ENCODE measurements at regions of chr16 and their contacts with region 1.

Region 1: GRCh38 chr16:15592324-15592723 is 50.6 kb downstream of the MARF1 start:
- DNase-seq: no peak
- H3K4me3 ChIP-seq: no peak overlapping the region
- H3K27ac ChIP-seq: no peak overlapping the region
- H3K4me1 ChIP-seq: peaks cover 17% of the 10 kb centered on the region
- H3K27me3 ChIP-seq: no peaks in the 10 kb centered on the region
- CTCF ChIP-seq: no peak
- POLR2A ChIP-seq: no peak

Region 2: GRCh38 chr16:15434425-15435215 is 157.7 kb before region 1 on chr16 and contains the start of gene BMERB1:
- CTCF ChIA-PET with region 1: no interaction called
- POLR2A ChIA-PET with region 1: no interaction called
- dilution Hi-C with region 1: no loop called
- intact Hi-C with region 1: loop called (anchors 2 kb)
- DNase-seq: peak; percentile 73
- H3K4me3 ChIP-seq: peak within 1 kb of the TSS; percentile 67 to 96 (median 72)
- H3K27ac ChIP-seq: no peak within 1 kb of the TSS
- H3K4me1 ChIP-seq: peaks cover 9% of the 10 kb centered on the region
- H3K27me3 ChIP-seq: no peaks in the 10 kb centered on the region
- CTCF ChIP-seq: no peak
- POLR2A ChIP-seq: no peak
- total RNA-seq, gene BMERB1: 14.1 and 27.2 TPM in 2 replicates

Region 3: GRCh38 chr16:15502041-15502725 is 90.1 kb before region 1 on chr16:
- CTCF ChIA-PET with region 1: no interaction called
- POLR2A ChIA-PET with region 1: no interaction called
- dilution Hi-C with region 1: no loop called
- intact Hi-C with region 1: loop called (anchors 2 kb)
- DNase-seq: peak; percentile 93
- H3K4me3 ChIP-seq: peak overlapping the region in 1 of 3 experiments; percentile 40
- H3K27ac ChIP-seq: peak overlapping the region; percentile 68
- H3K4me1 ChIP-seq: peaks cover 15% of the 10 kb centered on the region
- H3K27me3 ChIP-seq: no peaks in the 10 kb centered on the region
- CTCF ChIP-seq: no peak
- POLR2A ChIP-seq: no peak

Region 4: GRCh38 chr16:15581127-15581815 is 11.1 kb before region 1 on chr16:
- CTCF ChIA-PET with region 1: interaction called, 8 read pairs
- POLR2A ChIA-PET with region 1: no interaction called
- dilution Hi-C with region 1: no loop called
- intact Hi-C with region 1: loop called (anchors 1 kb)
- DNase-seq: peak; percentile 61
- H3K4me3 ChIP-seq: no peak overlapping the region
- H3K27ac ChIP-seq: peak overlapping the region; percentile 58
- H3K4me1 ChIP-seq: peaks cover 15% of the 10 kb centered on the region
- H3K27me3 ChIP-seq: no peaks in the 10 kb centered on the region
- CTCF ChIP-seq: no peak
- POLR2A ChIP-seq: no peak

Region 5: GRCh38 chr16:16120382-16121184 is 528.3 kb after region 1 on chr16:
- CTCF ChIA-PET with region 1: no interaction called
- POLR2A ChIA-PET with region 1: no interaction called
- dilution Hi-C with region 1: no loop called
- intact Hi-C with region 1: loop called (anchors 2 kb)
- DNase-seq: peak; percentile 98
- H3K4me3 ChIP-seq: peak overlapping the region in 1 of 3 experiments; percentile 4
- H3K27ac ChIP-seq: peak overlapping the region; percentile 83
- H3K4me1 ChIP-seq: peaks cover 19% of the 10 kb centered on the region
- H3K27me3 ChIP-seq: no peaks in the 10 kb centered on the region
- CTCF ChIP-seq: no peak
- POLR2A ChIP-seq: peak; percentile 81

Measured in endothelial cell of umbilical vein (primary cell).